Activated B cell treated with CpG ODN at 0.5 μM for 24 hours (primary cell): ENCODE measurements at regions of chr17 and their contacts with region 1.

Region 1: GRCh38 chr17:18183334-18184142 is at the start of gene ALKBH5:
- DNase-seq: peak; percentile 98
- ATAC-seq: peak; percentile 82
- H3K4me3 Mint-ChIP-seq: peak within 1 kb of the TSS; percentile 98
- H3K27ac Mint-ChIP-seq: peak within 1 kb of the TSS; percentile 99
- H3K4me1 Mint-ChIP-seq: peaks cover 47% of the 10 kb centered on the region
- H3K27me3 Mint-ChIP-seq: no peaks in the 10 kb centered on the region
- CTCF ChIP-seq: no peak
- total RNA-seq, gene ALKBH5: 72.8 and 74.6 TPM in 2 replicates

Region 2: DNA sequence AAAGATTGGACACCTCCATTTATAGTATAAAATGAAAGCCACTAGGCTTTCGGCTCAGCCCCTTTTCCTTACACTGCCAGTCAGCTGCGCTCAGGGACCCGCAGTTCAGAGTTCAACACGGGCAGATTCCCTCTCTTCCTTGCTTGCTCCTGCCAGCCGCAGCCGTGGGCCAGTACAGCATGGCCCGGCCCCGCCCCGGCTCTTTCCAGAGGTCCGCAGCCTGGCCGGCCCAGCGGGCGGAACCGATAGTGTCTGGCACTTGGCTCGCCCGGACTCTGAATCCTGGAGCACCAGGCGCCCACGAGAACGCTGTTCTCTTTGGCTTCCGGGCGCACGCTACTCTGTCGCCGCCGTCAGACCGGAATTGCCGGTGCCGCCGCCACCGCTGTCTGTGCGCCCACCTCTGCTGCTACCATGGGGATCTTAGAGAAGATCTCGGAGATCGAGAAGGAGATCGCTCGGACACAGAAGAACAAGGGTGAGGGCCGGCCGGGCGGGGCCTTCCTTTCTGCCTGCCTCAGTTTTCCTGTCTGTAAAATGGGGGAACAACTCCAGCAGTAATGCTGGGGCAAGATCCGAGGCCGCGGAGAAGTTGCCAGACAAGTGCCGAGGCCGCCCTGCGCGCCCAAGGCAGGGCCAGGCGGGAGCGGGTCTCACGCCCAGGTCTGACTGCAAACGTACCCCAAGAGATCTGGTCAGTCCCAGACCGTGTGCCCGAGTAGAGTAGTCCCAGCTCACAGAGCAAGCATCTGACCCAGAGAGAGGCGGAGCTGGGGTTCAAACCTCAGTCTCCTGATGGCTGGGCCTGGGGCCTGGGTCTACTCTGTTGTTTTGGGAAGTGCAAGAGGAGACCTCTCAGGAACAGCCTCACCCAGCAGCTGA is 95.7 kb before region 1 on chr17 and contains the start of gene DRG2:
- CTCF ChIA-PET with region 1: no interaction called
- POLR2A ChIA-PET with region 1: interaction called, 9 read pairs
- intact Hi-C with region 1: loop called (anchors 1 kb)
- DNase-seq: peak; percentile 93
- ATAC-seq: peak; percentile 95
- H3K4me3 Mint-ChIP-seq: peak within 1 kb of the TSS; percentile 99
- H3K27ac Mint-ChIP-seq: peak within 1 kb of the TSS; percentile 95
- H3K4me1 Mint-ChIP-seq: peaks cover 26% of the 10 kb centered on the region
- H3K27me3 Mint-ChIP-seq: no peaks in the 10 kb centered on the region
- CTCF ChIP-seq: no peak
- total RNA-seq, gene DRG2: 55.7 and 67.1 TPM in 2 replicates

Region 3: GRCh38 chr17:18158022-18158600 is 25.4 kb before region 1 on chr17:
- CTCF ChIA-PET with region 1: no interaction called
- POLR2A ChIA-PET with region 1: interaction called, 43 read pairs
- intact Hi-C with region 1: loop called (anchors 1 kb)
- DNase-seq: peak; percentile 91
- ATAC-seq: peak; percentile 75
- H3K4me3 Mint-ChIP-seq: peak overlapping the region; percentile 89
- H3K27ac Mint-ChIP-seq: peak overlapping the region; percentile 85
- H3K4me1 Mint-ChIP-seq: peaks cover 23% of the 10 kb centered on the region
- H3K27me3 Mint-ChIP-seq: no peaks in the 10 kb centered on the region
- CTCF ChIP-seq: no peak

Region 4: DNA sequence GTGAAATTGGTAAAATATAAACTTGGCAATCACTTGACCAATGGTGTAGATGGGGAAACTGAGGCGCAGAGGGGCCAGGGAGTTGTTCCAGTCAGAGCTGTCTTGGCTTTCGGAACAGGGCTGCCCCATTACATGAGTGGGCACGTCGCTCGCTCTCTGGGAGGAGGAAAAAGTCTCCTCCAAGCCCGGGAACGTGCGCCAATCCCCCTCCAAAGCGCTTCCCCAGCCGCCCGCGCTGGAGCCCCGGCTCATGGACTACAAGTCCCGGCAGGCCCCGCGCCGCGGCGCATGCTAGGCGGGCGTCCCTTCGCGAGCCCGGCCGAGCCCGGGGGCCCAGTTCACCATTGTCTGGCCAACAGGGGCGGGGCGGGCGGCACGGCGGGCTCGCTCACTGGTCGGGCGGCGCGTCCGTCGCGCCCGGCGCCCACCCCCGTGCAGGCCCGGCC is 41.6 kb after region 1 on chr17:
- CTCF ChIA-PET with region 1: no interaction called
- POLR2A ChIA-PET with region 1: interaction called, 4 read pairs
- intact Hi-C with region 1: loop called (anchors 1 kb)
- DNase-seq: peak; percentile 95
- ATAC-seq: peak; percentile 98
- H3K4me3 Mint-ChIP-seq: peak overlapping the region; percentile 38
- H3K27ac Mint-ChIP-seq: peak overlapping the region; percentile 12
- H3K4me1 Mint-ChIP-seq: peaks cover 9% of the 10 kb centered on the region
- H3K27me3 Mint-ChIP-seq: no peaks in the 10 kb centered on the region
- CTCF ChIP-seq: no peak

Region 5: GRCh38 chr17:18314731-18315561 is 131.4 kb after region 1 on chr17 and contains the starts of genes SMCR8 and TOP3A:
- CTCF ChIA-PET with region 1: no interaction called
- POLR2A ChIA-PET with region 1: interaction called, 9 read pairs
- intact Hi-C with region 1: loop called (anchors 1 kb)
- DNase-seq: peak; percentile 91
- ATAC-seq: peak; percentile 94
- H3K4me3 Mint-ChIP-seq: peak within 1 kb of the TSS; percentile 100
- H3K27ac Mint-ChIP-seq: peak within 1 kb of the TSS; percentile 100
- H3K4me1 Mint-ChIP-seq: peaks cover 77% of the 10 kb centered on the region
- H3K27me3 Mint-ChIP-seq: no peaks in the 10 kb centered on the region
- CTCF ChIP-seq: no peak
- total RNA-seq, gene SMCR8: 32.5 and 36.9 TPM in 2 replicates
- total RNA-seq, gene TOP3A: 44.8 and 46.4 TPM in 2 replicates